ENCODE measurements at regions of chr1 and their contacts with region 1.

Region 1: GRCh38 chr1:6646499-6647148 is 22.0 kb downstream of the THAP3 start:
- DNase-seq: no peak
- H3K4me3 ChIP-seq: no peak overlapping the region
- H3K27ac ChIP-seq: no peak overlapping the region
- H3K4me1 ChIP-seq: no peaks in the 10 kb centered on the region; a peak in 2 of 7 replicates
- H3K27me3 ChIP-seq: no peaks in the 10 kb centered on the region
- CTCF ChIP-seq: peak in 2 of 3 experiments; percentile 48 to 54; a peak in 3 of 4 replicates
- EP300 ChIP-seq: no peak
- POLR2A ChIP-seq: no peak
- RAD21 ChIP-seq: peak; percentile 75 to 79

Region 2: GRCh38 chr1:6490181-6491075 is 156.2 kb before region 1 on chr1:
- CTCF ChIA-PET with region 1: no interaction called
- POLR2A ChIA-PET with region 1: no interaction called
- DNase-seq: peak in 1 of 2 experiments; percentile 90
- H3K4me3 ChIP-seq: peak overlapping the region; percentile 45 to 80 (median 68)
- H3K27ac ChIP-seq: no peak overlapping the region
- H3K4me1 ChIP-seq: peaks cover 0 to 28% (median 14%) of the 10 kb centered on the region in 4 experiments; a peak in 6 of 7 replicates
- H3K27me3 ChIP-seq: no peaks in the 10 kb centered on the region; a peak in 2 of 7 replicates
- CTCF ChIP-seq: 0 out of 4 replicates have a peak, but pooled peaks of 1 of the 3 experiments have one; percentile 1
- EP300 ChIP-seq: peak in 1 of 2 experiments; percentile 97; a peak in 1 of 3 replicates
- POLR2A ChIP-seq: peak in 1 of 2 experiments; percentile 25; a peak in 1 of 3 replicates
- RAD21 ChIP-seq: peak in 1 of 2 experiments; percentile 1; a peak in 1 of 4 replicates

Region 3: DNA sequence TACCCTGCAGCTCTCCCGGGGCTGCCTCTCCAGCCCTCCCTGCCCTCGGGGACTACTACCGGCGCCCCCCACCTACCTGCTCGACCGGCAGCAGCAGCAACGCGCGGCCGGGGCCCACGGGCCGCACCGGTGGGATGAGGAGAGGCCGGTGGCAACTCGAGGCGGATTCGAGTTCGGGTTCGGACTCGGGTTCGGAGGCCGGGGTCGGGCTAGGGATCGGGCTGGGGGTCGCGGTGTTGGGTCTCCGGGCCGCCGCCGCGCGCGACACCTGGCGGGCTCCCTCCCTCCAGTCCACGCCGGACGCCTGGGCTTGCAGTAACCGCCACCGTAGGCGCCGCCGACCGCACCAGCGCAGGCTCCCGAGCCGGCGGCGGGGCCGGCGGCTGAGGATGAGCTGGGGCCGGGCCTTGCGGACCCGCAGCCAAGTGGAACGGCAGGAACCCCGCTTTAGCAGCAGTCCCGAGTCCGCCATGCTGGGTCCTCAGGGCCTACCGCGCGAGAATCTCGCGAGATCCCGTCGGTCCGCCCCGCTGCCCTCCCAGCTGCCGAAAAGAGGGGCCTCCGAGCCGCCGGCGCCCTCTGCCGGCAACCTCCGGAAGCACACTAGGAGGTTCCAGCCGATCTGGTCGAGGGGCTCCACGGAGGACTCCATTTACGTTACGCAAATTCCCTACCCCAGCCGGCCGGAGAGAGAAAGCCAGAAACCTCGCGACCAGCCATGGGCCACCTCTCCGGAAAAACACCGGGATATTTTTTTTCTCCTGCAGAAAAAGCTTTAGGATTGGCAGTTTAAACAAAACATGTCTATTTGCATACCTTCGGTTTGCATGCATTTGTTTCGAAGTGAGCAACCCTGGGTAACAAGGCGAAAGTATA is 92.4 kb before region 1 on chr1 and contains the start of gene NOL9:
- CTCF ChIA-PET with region 1: interaction called, 19 read pairs
- POLR2A ChIA-PET with region 1: interaction called, 4 read pairs
- DNase-seq: peak; percentile 73 to 99
- H3K4me3 ChIP-seq: peak within 1 kb of the TSS; percentile 66 to 97 (median 90)
- H3K27ac ChIP-seq: peak within 1 kb of the TSS; percentile 86
- H3K4me1 ChIP-seq: peaks cover 3 to 6% (median 5%) of the 10 kb centered on the region in 4 experiments; a peak in 5 of 7 replicates
- H3K27me3 ChIP-seq: no peaks in the 10 kb centered on the region
- CTCF ChIP-seq: peak; percentile 85 to 93 (median 87)
- EP300 ChIP-seq: no peak
- POLR2A ChIP-seq: peak; percentile 54 to 87
- RAD21 ChIP-seq: peak; percentile 47 to 60
- total RNA-seq, gene NOL9: 38.1 and 42.9 TPM in 2 replicates

Region 4: GRCh38 chr1:6624710-6625583 is 21.7 kb before region 1 on chr1 and contains the start of gene THAP3:
- CTCF ChIA-PET with region 1: interaction called, 21 read pairs
- POLR2A ChIA-PET with region 1: interaction called, 6 read pairs
- DNase-seq: peak in 1 of 2 experiments; percentile 93
- H3K4me3 ChIP-seq: peak within 1 kb of the TSS; percentile 74 to 83 (median 76)
- H3K27ac ChIP-seq: peak within 1 kb of the TSS; percentile 75
- H3K4me1 ChIP-seq: 0 out of 7 replicates have a peak, but pooled peaks cover 0 to 2% (median 0%) of the 10 kb centered on the region in 4 experiments
- H3K27me3 ChIP-seq: no peaks in the 10 kb centered on the region
- CTCF ChIP-seq: peak in 1 of 3 experiments; percentile 38; a peak in 2 of 4 replicates
- EP300 ChIP-seq: 0 out of 3 replicates have a peak, but pooled peaks of 1 of the 2 experiments have one; percentile 13
- POLR2A ChIP-seq: peak in 1 of 2 experiments; percentile 25; a peak in 1 of 3 replicates
- RAD21 ChIP-seq: no peak
- total RNA-seq, gene THAP3: 12.4 and 15.3 TPM in 2 replicates

Region 5: DNA sequence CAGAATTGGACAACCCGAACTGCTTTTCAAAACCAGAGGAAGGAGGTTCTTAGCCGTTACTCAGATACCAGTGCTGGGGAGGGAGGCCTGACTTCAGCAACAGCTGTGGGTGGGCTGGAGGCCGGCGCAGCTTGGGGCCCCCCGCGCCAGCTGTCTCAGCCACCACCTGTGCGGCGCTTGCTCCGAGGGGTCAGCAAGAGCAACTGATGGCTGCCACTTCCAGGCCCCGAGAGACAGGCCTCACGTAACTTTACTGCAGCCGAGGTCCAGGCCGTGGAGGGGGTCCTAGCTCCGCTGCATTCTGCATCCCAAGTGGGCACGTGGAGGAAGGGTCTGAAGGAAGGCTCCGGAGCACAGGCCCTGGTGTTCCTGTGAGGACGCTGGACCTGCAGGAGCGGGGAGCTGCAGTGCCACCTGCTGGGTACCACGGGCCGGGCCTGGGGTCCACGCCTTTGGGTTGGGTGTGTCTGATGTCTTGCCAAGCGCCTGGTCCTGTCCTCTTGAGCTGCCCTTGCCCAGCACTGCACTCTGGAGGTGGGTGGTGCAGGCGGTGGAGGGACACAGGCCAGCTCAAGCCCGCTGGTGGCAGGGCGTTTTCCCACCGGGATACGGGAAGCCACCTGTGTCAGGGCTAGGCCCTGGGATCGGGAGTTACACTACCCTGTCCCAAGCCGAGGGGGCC is 12.1 kb before region 1 on chr1:
- CTCF ChIA-PET with region 1: interaction called, 48 read pairs
- POLR2A ChIA-PET with region 1: interaction called, 11 read pairs
- DNase-seq: peak in 1 of 2 experiments; percentile 79
- H3K4me3 ChIP-seq: no peak overlapping the region
- H3K27ac ChIP-seq: no peak overlapping the region
- H3K4me1 ChIP-seq: no peaks in the 10 kb centered on the region
- H3K27me3 ChIP-seq: no peaks in the 10 kb centered on the region
- CTCF ChIP-seq: peak; percentile 53 to 68 (median 58)
- EP300 ChIP-seq: no peak
- POLR2A ChIP-seq: no peak; a peak in 1 of 3 replicates
- RAD21 ChIP-seq: peak; percentile 53 to 64

Region 6: DNA sequence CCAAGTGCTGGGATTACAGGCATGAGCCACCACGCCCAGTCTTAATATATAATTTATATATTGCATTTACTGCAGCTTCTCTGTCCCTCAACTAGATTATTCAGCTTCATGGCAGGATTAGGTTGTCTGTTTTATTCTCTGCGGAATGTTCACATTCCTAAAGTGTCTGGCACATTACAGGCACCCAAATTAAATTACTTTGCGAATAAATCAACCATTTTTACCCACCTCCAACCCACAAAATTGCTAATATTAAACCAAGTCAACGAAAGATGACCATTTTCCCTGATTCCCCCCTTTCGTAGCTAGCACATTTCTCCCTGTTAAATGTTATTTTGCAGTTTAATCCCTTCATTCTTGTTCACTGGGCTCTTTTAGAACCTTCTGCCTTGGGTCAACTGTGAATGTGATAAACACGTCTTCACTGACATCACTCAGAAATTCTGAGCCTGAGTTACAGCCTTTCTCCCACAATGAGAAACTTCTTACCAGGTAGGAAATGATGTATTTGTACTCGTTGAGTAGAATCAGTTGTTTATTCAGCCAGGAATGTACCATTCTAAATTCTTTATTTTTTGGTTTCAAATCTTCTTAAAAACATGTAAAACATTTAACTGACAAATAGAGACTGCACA is 13.9 kb after region 1 on chr1:
- CTCF ChIA-PET with region 1: interaction called, 31 read pairs
- POLR2A ChIA-PET with region 1: no interaction called
- DNase-seq: no peak
- H3K4me3 ChIP-seq: no peak overlapping the region
- H3K27ac ChIP-seq: no peak overlapping the region
- H3K4me1 ChIP-seq: no peaks in the 10 kb centered on the region
- H3K27me3 ChIP-seq: no peaks in the 10 kb centered on the region
- CTCF ChIP-seq: no peak
- EP300 ChIP-seq: no peak
- POLR2A ChIP-seq: no peak
- RAD21 ChIP-seq: no peak

Region 7: GRCh38 chr1:6667139-6667538 is 20.5 kb after region 1 on chr1:
- CTCF ChIA-PET with region 1: interaction called, 31 read pairs
- POLR2A ChIA-PET with region 1: interaction called, 3 read pairs
- DNase-seq: no peak
- H3K4me3 ChIP-seq: no peak overlapping the region
- H3K27ac ChIP-seq: no peak overlapping the region
- H3K4me1 ChIP-seq: no peaks in the 10 kb centered on the region
- H3K27me3 ChIP-seq: no peaks in the 10 kb centered on the region
- CTCF ChIP-seq: no peak
- EP300 ChIP-seq: no peak
- POLR2A ChIP-seq: no peak
- RAD21 ChIP-seq: no peak

Region 8: DNA sequence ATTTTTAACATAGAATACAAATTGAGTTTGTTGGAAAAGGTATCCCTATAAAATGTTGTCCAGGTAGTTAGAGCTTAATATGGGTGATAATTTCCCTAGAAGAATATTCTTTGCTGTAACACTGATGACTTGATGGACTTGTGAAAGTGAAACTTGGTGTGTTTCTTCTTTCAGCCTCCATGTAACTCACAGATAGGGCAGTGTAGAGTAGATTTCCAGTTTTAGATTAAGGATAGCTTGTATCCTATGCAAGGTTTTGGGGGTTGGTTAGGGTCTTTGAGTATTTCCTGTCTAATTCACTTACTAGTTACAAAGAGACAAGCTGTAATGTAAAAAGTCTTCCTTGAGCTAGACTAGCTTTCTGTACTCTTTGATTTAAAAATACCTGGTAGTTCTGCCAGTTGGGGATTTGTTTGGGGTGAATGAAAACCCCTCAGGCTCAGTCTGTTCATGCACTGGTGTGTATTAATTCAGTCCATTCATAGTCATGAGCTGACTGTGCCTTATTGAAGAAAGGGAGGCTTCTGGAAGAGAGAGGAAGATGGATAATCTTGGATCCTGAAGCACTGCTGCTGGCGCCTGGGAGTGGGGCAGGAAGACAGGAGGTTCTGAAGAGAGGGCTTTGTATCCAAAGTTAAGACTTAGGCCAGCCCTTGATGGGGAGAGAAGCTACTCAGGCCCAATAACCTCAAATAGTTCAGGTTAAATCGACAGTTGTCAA is 222.2 kb after region 1 on chr1:
- CTCF ChIA-PET with region 1: no interaction called
- POLR2A ChIA-PET with region 1: no interaction called
- DNase-seq: no peak
- H3K4me3 ChIP-seq: no peak overlapping the region
- H3K27ac ChIP-seq: no peak overlapping the region
- H3K4me1 ChIP-seq: peaks cover 2 to 18% (median 14%) of the 10 kb centered on the region in 4 experiments; a peak in 6 of 7 replicates
- H3K27me3 ChIP-seq: no peaks in the 10 kb centered on the region
- CTCF ChIP-seq: no peak
- EP300 ChIP-seq: no peak
- POLR2A ChIP-seq: no peak
- RAD21 ChIP-seq: no peak